Cardiac septum (tissue), 1 donor: ENCODE measurements at regions of chr15 and their contacts with region 1.

Region 1: DNA sequence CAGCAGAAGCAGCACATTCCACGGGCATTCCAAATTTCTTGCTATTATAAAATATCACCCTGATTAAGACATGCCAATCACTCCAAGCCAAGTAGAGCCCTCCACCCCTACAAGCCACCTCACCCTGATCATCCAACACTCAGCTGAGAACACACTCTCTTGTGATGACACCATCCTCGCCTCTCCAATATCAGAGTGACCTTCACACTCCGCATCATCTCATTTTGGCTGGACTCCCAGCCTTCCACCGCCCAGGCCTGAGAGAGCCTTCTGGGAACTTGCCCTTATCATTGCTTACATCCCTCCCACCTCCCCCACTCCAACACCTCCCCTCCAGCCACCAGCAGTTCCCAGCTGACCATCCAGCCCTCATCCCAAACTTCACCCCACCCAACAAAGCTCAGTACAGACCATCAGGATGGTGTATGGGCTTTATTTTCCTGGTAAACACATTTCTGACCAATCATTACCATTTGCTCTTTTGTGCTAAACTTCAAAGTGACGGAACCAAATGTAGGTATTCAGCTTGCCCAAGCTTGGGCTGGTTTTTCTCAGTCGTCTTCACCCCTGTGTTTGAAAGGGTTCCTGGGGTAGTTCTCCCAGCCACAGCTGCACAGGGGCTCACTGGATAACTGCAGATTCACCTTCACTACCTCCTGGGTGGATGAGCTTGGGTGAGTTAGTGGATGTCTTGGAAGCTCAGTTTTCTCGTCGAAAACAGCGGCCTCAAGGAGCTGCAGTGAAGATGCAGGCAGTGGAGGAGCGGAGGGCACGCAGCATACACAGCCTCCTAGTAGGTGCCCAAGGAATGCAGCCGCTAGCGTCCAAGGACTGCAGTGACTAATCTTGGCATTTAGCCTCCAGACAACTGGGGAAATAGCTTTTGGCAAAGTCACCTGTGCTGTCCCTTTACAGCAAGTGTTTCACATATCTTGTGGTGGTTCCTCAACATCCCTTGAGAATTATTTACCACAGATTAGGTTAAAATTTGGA is 115.1 kb downstream of the LIPC start:
- DNase-seq: peak; percentile 81

Region 2: DNA sequence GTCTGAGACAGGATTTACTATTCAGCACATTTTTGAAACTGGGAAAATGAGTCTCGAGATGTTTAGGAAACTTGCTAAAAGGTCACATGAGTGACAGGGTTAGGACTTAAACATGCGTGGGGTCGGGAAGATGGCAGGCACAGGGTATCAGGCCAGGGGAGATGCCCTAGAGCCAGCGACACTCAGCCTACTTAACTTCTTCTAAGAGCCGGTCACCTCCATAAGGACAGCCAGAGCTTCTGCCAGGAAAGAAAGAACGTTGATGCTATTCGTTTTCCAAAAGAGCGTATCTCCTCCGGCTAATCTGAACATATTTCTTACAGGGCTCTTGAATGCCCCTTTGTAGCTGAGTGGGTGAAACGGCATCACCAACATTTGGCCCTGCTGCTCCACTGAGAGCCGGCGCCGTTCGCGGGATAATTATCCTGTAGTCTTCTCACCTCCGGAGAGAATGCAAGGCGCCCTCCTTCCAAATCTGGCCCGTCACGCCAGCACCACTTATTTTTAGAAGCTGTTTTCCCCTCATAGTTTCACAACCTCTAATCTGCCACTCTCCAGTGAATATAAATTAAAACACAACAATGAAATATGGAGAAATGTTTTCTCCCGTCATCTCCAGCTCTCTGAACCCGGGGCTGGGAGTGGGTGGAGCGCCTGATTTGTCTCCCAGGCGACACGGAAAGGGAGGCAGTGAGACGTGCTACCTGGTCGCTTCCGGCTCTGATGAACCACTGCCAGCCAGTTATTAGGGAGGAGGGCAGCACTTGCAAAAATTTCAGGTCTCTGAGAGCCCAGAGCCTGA is 56.6 kb before region 1 on chr15:
- intact Hi-C with region 1: loop called (anchors 5 kb)
- DNase-seq: no peak

Region 3: GRCh38 chr15:58521293-58521991 is 25.5 kb before region 1 on chr15:
- intact Hi-C with region 1: loop called (anchors 2 kb)
- DNase-seq: peak; percentile 90